Dorsolateral prefrontal cortex (tissue), 120 donors: ENCODE measurements at regions of chr16 and their contacts with region 1.

Region 1: DNA sequence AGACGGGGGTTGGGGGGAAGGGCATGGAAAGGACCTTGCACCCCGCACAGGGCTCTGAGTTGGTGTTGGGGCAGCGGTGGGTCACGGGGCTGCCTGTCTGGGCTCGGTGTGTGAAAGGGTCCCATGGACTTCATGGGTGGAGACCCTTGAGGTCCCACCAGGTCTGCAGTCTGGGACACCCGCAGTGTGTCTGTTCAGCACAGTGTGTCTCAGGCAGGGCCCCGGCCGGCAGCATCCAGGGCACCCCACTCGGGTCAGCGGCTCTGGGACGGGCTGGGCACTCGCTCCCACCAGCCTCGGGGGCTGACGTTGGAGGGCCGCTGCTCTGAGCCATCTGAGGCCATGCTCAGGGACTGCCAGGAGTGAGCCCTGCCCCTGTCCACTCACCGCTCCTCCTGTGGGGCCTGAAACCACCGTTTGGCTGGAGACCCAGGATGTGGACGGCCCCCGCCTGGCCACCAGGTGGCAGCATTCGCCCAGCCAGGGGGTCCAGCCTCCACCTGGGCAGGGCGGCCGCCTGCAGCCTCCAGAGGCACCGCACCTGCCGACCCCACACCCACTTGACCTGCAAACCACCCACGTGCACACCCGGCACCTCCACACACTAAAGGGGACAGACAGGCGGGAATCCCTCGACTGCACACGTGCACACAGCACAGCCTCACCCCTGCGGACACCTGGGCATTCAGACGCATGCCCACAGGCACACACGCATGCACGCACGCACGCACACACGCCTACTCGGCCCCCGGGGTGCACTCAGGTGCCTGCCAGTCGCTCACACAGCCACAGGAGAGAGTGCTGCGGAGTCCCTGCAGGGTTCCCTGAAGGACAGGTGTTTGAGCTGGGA is 10.1 kb upstream of the ZFPM1 start:
- DNase-seq: peak; percentile 54 to 84 (median 66)
- H3K4me3 ChIP-seq: peak overlapping the region in 7 of 59 donors; percentile 7 to 32 (median 18)
- H3K27ac ChIP-seq: no peak overlapping the region
- H3K27me3 ChIP-seq: peaks cover 0 to 9% (median 0%) of the 10 kb centered on the region in 45 donors
- CTCF ChIP-seq: peak; percentile 77 to 99 (median 95)

Region 2: GRCh38 chr16:88368036-88368435 is 74.9 kb before region 1 on chr16:
- intact Hi-C with region 1: no loop called
- DNase-seq: peak in 4 of 10 donors; percentile 23 to 41 (median 38)
- H3K4me3 ChIP-seq: no peak overlapping the region
- H3K27ac ChIP-seq: peak overlapping the region in 23 of 59 donors; percentile 6 to 72 (median 40)
- H3K27me3 ChIP-seq: no peaks in the 10 kb centered on the region
- CTCF ChIP-seq: no peak

Region 3: GRCh38 chr16:88527186-88527936 is 84.4 kb after region 1 on chr16:
- intact Hi-C with region 1: loop called (anchors 1 to 2 kb)
- DNase-seq: peak in 6 of 10 donors; percentile 49 to 79 (median 60)
- H3K4me3 ChIP-seq: no peak overlapping the region
- H3K27ac ChIP-seq: peak overlapping the region in 11 of 59 donors; percentile 0 to 46 (median 16)
- H3K27me3 ChIP-seq: no peaks in the 10 kb centered on the region
- CTCF ChIP-seq: peak; percentile 54 to 94 (median 86)

Region 4: DNA sequence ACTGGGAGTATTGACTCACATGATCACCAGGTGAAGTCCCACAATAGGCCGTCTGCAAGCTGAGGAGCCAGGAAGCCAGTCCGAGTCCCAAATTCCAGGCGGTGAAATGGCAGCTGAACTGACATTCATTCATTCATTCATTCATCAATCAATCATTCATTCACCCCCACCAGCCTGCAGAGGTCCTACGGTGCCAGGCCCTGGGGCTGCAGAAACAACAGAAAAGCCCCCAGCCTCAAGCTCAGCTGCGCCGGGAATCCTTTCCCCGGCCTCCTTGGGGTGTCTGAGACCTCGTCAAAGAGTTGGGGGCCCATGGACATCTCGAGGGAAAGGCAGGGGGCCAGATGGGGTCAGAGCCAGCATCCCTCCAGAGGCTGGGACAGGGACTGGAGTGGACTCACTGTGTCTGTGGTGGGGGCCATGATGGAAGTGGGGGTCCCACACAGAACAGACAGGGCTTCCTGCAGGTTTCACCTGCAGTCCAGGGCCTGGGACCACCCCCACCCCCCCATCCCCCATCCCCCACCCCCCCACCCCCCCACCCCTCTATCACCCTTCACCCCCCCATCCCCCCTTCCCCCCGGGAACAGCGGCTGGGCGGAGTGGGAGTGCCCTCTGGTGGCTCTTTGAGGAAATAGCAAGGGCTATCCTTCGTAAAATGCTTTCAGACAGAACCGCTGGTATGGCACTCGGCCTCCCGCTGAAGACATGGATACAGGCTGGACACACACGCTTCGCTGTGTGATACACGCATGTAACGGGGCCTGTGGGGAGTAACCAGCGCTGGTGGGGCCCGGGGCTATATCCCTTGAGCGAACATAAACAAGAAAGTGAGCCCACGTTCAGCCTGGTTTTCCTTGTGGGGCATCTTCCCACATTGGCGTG is 118.8 kb after region 1 on chr16:
- intact Hi-C with region 1: loop called (anchors 2 to 5 kb)
- DNase-seq: peak in 9 of 10 donors; percentile 31 to 67 (median 61)
- H3K4me3 ChIP-seq: peak overlapping the region in 50 of 59 donors; percentile 12 to 62 (median 43)
- H3K27ac ChIP-seq: peak overlapping the region in 11 of 59 donors; percentile 15 to 77 (median 58)
- H3K27me3 ChIP-seq: peaks cover 0 to 17% (median 0%) of the 10 kb centered on the region in 45 donors
- CTCF ChIP-seq: peak in 55 of 56 donors; percentile 29 to 77 (median 65)